Esophagus muscularis mucosa (tissue), 4 donors: ENCODE measurements at regions of chr1 and their contacts with region 1.

Region 1: GRCh38 chr1:32072622-32073298 is at the start of gene TMEM39B:
- DNase-seq: peak; percentile 98
- H3K4me3 ChIP-seq: peak within 1 kb of the TSS; percentile 73 to 97 (median 84)
- H3K27ac ChIP-seq: peak within 1 kb of the TSS; percentile 86 to 95 (median 94)
- H3K4me1 ChIP-seq: peaks cover 17 to 32% (median 21%) of the 10 kb centered on the region in 4 donors
- H3K27me3 ChIP-seq: no peaks in the 10 kb centered on the region
- CTCF ChIP-seq: peak in 2 of 3 experiments; percentile 26
- EP300 ChIP-seq: no peak
- POLR2A ChIP-seq: peak; percentile 43
- total RNA-seq, gene TMEM39B: 2.9 to 6.1 (median 4.8) TPM

Region 2: DNA sequence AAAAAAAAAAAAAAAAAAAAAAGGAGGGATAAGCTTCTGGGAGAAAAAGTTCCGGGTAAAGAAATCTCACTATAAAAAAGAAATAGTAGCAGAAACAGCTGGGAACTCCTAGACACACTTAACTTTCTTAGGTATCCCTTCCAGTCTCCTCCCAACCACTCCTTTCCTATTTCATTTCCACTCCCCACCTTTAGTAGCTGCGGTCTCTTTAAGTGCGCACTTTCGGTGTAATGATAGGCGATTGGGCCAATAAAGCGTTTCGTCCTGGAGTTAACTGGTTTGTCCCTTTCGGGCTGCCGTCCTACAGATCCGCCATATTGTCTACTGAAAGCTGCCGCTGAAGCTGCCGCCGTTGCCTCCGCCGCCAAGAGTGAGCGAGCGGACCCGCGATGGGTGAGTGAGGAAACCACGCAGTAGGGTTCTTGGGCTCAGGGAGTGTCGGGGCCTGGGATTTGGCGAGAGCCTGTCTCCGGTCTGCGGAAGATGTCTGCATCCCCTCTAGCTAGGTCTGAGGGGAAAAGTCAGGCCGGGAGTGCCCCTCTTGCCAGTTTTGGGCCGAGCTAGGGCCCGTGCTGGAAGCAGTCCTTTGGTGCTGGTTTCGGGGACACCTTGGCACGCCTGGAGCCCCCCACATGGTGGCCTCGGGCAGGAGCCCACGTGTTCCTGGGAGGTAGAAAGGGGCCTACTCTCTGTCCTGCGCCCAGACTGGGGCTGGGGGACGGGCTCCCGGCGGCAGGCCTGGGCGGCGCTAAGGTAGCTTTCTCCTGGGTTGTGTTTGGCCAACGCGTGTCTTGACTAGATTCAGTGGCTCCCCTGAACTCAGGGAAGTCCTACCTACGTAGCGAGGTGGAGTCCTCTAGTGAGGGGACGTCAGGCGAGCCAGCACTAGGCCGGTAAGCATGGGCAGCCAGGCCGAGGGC is 35.2 kb after region 1 on chr1 and contains the start of gene KPNA6:
- intact Hi-C with region 1: loop called (anchors 5 kb)
- DNase-seq: peak; percentile 97
- H3K4me3 ChIP-seq: peak within 1 kb of the TSS; percentile 84 to 93 (median 88)
- H3K27ac ChIP-seq: peak within 1 kb of the TSS; percentile 89 to 92 (median 90)
- H3K4me1 ChIP-seq: peaks cover 43 to 52% (median 46%) of the 10 kb centered on the region in 4 donors
- H3K27me3 ChIP-seq: no peaks in the 10 kb centered on the region
- CTCF ChIP-seq: peak in 1 of 3 experiments; percentile 20
- EP300 ChIP-seq: no peak
- POLR2A ChIP-seq: peak; percentile 34
- total RNA-seq, gene KPNA6: 47.8 to 71.3 (median 55.4) TPM